Heart right ventricle (tissue), 16 donors: ENCODE measurements at regions of chr1 and their contacts with region 1.

Region 1: GRCh38 chr1:167059045-167059808 is 30.9 kb downstream of the GPA33 start:
- DNase-seq: peak; percentile 59 to 71
- ATAC-seq: peak in 7 of 8 donors; percentile 55 to 72 (median 61)
- H3K4me3 ChIP-seq: peak overlapping the region in 3 of 10 donors; percentile 17 to 20 (median 19)
- H3K27ac ChIP-seq: no peak overlapping the region
- H3K4me1 ChIP-seq: peaks cover 0 to 8% (median 5%) of the 10 kb centered on the region in 9 donors
- H3K27me3 ChIP-seq: peaks cover 0 to 13% (median 0%) of the 10 kb centered on the region in 7 donors
- CTCF ChIP-seq: peak; percentile 91 to 98 (median 96)

Region 2: DNA sequence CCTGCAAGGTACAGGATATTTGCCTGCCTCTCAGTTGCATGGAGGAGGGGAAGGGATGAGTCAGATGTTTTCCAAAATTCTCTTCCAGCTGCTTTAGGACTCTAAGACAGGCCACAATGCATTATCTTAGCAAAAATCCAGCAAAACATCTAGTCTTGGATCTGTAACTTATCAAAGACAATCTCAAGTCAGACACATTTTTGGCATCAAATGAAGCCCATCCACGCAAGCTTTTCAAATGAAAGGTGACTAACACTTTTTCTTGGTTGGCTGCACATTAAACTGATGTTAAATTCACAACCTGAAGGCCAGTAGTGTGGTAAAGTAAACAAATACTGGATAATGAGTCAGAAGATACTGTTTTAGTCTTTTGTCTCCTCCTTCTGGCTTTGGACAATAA is 913.7 kb before region 1 on chr1:
- intact Hi-C with region 1: no loop called
- DNase-seq: no peak
- ATAC-seq: no peak
- H3K4me3 ChIP-seq: no peak overlapping the region
- H3K27ac ChIP-seq: no peak overlapping the region
- H3K4me1 ChIP-seq: no peaks in the 10 kb centered on the region
- H3K27me3 ChIP-seq: no peaks in the 10 kb centered on the region
- CTCF ChIP-seq: no peak

Region 3: GRCh38 chr1:166884040-166884642 is 175.1 kb before region 1 on chr1:
- intact Hi-C with region 1: loop called in 9 of 10 experiments (anchors 1 to 5 kb)
- DNase-seq: peak; percentile 37 to 49
- ATAC-seq: peak; percentile 63 to 93 (median 80)
- H3K4me3 ChIP-seq: peak overlapping the region in 4 of 10 donors; percentile 9 to 23 (median 14)
- H3K27ac ChIP-seq: no peak overlapping the region
- H3K4me1 ChIP-seq: peaks cover 0 to 10% (median 6%) of the 10 kb centered on the region in 9 donors
- H3K27me3 ChIP-seq: peaks cover 0 to 41% (median 30%) of the 10 kb centered on the region in 7 donors
- CTCF ChIP-seq: peak; percentile 33 to 75 (median 71)

Region 4: GRCh38 chr1:166910396-166910994 is 148.7 kb before region 1 on chr1:
- intact Hi-C with region 1: loop called (anchors 1 to 5 kb)
- DNase-seq: peak in 1 of 2 donors; percentile 60
- ATAC-seq: peak; percentile 80 to 95 (median 88)
- H3K4me3 ChIP-seq: no peak overlapping the region
- H3K27ac ChIP-seq: no peak overlapping the region
- H3K4me1 ChIP-seq: peaks cover 0 to 4% (median 0%) of the 10 kb centered on the region in 9 donors
- H3K27me3 ChIP-seq: no peaks in the 10 kb centered on the region
- CTCF ChIP-seq: peak; percentile 28 to 81 (median 76)

Region 5: GRCh38 chr1:166975361-166976129 is 83.7 kb before region 1 on chr1 and contains the start of gene ILDR2:
- intact Hi-C with region 1: loop called in 3 of 10 experiments (anchors 5 to 10 kb)
- DNase-seq: peak; percentile 32 to 55
- ATAC-seq: peak; percentile 57 to 92 (median 82)
- H3K4me3 ChIP-seq: peak within 1 kb of the TSS; percentile 42 to 78 (median 70)
- H3K27ac ChIP-seq: peak within 1 kb of the TSS in 9 of 10 donors; percentile 8 to 85 (median 67)
- H3K4me1 ChIP-seq: peaks cover 0 to 19% (median 9%) of the 10 kb centered on the region in 9 donors
- H3K27me3 ChIP-seq: peaks cover 0 to 69% (median 36%) of the 10 kb centered on the region in 7 donors
- CTCF ChIP-seq: peak in 1 of 9 donors; percentile 34
- total RNA-seq, gene ILDR2: 3.1 to 12.6 (median 5.1) TPM

Region 6: GRCh38 chr1:167022384-167022783 is 36.8 kb before region 1 on chr1:
- intact Hi-C with region 1: no loop called
- DNase-seq: no peak
- ATAC-seq: no peak
- H3K4me3 ChIP-seq: no peak overlapping the region
- H3K27ac ChIP-seq: no peak overlapping the region
- H3K4me1 ChIP-seq: no peaks in the 10 kb centered on the region
- H3K27me3 ChIP-seq: peaks cover 0 to 10% (median 2%) of the 10 kb centered on the region in 7 donors
- CTCF ChIP-seq: no peak